Mammary epithelial cell (primary cell): ENCODE measurements at regions of chr17 and their contacts with region 1.

Region 1: GRCh38 chr17:4948931-4949320 is 596 bp upstream of the PFN1 start:
- DNase-seq: peak; percentile 91
- H3K4me3 ChIP-seq: peak overlapping the region; percentile 74 to 100 (median 98)
- H3K27ac ChIP-seq: peak overlapping the region; percentile 67
- H3K4me1 ChIP-seq: peaks cover 29% of the 10 kb centered on the region
- H3K27me3 ChIP-seq: no peaks in the 10 kb centered on the region
- CTCF ChIP-seq: no peak

Region 2: GRCh38 chr17:4721203-4722135 is 227.5 kb before region 1 on chr17:
- CTCF ChIA-PET with region 1: no interaction called
- dilution Hi-C with region 1: loop called (anchors 5 kb)
- in situ Hi-C with region 1: no loop called
- intact Hi-C with region 1: no loop called
- DNase-seq: no peak
- H3K4me3 ChIP-seq: no peak overlapping the region
- H3K27ac ChIP-seq: no peak overlapping the region
- H3K4me1 ChIP-seq: peaks cover 4% of the 10 kb centered on the region
- H3K27me3 ChIP-seq: no peaks in the 10 kb centered on the region
- CTCF ChIP-seq: no peak

Region 3: DNA sequence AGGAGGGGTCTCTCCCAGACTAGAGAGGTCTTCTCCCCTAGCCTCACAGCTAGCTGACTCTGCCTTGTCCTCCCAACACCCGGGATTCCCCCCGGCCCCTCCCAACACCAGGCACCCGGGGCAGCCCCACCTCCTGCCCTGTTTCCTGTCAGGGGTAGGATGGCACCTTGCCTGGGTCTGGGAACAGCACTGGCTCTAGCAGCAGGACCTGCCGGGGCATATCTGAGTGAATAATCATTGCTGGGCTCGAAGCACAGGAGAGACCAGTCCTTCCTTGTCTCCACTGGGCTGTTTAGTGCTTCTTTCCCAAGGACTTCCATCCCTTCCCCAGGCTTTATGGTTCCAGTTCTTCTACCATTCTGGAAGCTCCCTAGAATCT is 90.1 kb before region 1 on chr17:
- CTCF ChIA-PET with region 1: no interaction called
- dilution Hi-C with region 1: loop called (anchors 5 kb)
- in situ Hi-C with region 1: no loop called
- intact Hi-C with region 1: loop called (anchors 5 kb)
- DNase-seq: peak; percentile 93
- H3K4me3 ChIP-seq: peak overlapping the region; percentile 50 to 91 (median 78)
- H3K27ac ChIP-seq: peak overlapping the region; percentile 83
- H3K4me1 ChIP-seq: peaks cover 60% of the 10 kb centered on the region
- H3K27me3 ChIP-seq: no peaks in the 10 kb centered on the region
- CTCF ChIP-seq: no peak

Region 4: DNA sequence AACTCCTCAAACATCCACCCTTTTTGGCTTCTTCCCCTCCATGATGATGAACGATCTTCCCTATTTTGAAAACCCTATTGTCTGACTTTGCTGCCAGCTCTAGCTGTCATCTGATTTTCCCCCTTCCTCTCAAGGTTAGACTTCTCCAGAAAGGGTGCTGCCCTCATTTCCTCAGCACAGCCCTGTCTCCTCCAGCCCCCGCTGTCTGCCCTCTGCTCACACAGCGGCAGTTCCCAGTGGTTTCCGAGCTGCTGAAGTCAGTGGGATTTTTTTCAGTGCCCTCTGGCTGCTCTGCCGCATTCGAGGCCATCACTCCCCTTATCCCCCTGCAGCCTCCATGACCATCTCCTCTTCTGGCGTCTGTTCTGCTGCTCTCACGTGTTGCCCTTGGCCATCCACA is 76.1 kb before region 1 on chr17:
- CTCF ChIA-PET with region 1: no interaction called
- dilution Hi-C with region 1: no loop called
- in situ Hi-C with region 1: no loop called
- intact Hi-C with region 1: no loop called
- DNase-seq: no peak
- H3K4me3 ChIP-seq: no peak overlapping the region
- H3K27ac ChIP-seq: no peak overlapping the region
- H3K4me1 ChIP-seq: peaks cover 8% of the 10 kb centered on the region
- H3K27me3 ChIP-seq: no peaks in the 10 kb centered on the region
- CTCF ChIP-seq: no peak

Region 5: GRCh38 chr17:4966844-4967538 is 18.1 kb after region 1 on chr17:
- CTCF ChIA-PET with region 1: interaction called, 4 read pairs
- dilution Hi-C with region 1: no loop called
- in situ Hi-C with region 1: no loop called
- intact Hi-C with region 1: loop called (anchors 1 kb)
- DNase-seq: peak; percentile 100
- H3K4me3 ChIP-seq: peak overlapping the region; percentile 67 to 86 (median 81)
- H3K27ac ChIP-seq: peak overlapping the region; percentile 89
- H3K4me1 ChIP-seq: peaks cover 29% of the 10 kb centered on the region
- H3K27me3 ChIP-seq: no peaks in the 10 kb centered on the region
- CTCF ChIP-seq: no peak

Region 6: DNA sequence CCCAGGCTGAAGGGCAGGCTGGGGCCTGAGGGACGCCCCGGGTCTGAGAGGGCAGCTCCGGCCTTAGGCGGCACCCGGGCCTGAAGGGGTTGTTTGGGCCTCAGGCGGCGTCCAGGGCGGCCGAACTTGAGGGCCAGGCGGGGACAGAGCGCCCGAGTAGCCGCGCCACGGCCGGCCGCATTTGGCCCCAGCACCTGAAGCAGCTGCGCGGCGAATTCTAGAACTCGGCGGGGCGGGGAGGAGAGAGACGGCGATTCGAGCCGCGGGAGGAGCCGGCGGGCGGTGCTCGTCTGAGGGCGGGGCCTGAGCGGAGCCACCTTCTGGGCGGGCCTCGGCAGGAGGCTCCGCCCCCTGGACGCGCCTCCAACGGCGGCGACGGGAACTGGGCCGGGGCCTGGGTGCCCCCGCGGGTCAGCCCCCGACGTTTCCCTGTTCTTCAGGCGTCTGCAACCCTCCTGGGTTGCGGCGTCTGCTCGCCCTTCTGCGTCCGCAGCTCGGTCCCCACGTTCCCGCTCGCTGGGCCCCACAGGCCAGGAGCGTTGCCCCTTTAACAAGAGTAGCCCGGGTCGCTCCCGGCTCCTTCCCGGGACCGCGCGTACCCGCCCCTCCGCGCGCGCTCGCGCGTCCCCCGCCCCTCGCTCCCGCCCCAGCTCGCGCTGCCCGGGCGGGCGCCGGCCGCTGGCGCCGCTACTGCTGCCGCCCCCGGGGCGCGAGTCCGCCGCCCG is 48.5 kb after region 1 on chr17 and contains the starts of genes INCA1 and KIF1C:
- CTCF ChIA-PET with region 1: no interaction called
- dilution Hi-C with region 1: no loop called
- in situ Hi-C with region 1: no loop called
- intact Hi-C with region 1: loop called (anchors 2 kb)
- DNase-seq: peak; percentile 90
- H3K4me3 ChIP-seq: peak within 1 kb of the TSS; percentile 65 to 95 (median 82)
- H3K27ac ChIP-seq: peak within 1 kb of the TSS; percentile 43
- H3K4me1 ChIP-seq: peaks cover 12% of the 10 kb centered on the region
- H3K27me3 ChIP-seq: no peaks in the 10 kb centered on the region
- CTCF ChIP-seq: no peak
- total RNA-seq, gene INCA1: 0.33 to 0.42 TPM
- total RNA-seq, gene KIF1C: 105 to 198 TPM